CD8-positive, alpha-beta T cell (primary cell): ENCODE measurements at regions of chr17 and their contacts with region 1.

Region 1: GRCh38 chr17:42517516-42517915 is 18.5 kb upstream of the NAGLU start:
- DNase-seq: peak; percentile 68 to 90 (median 84)
- ATAC-seq: peak; percentile 92
- H3K4me3 ChIP-seq: no peak overlapping the region
- H3K4me3 Mint-ChIP-seq: no peak overlapping the region
- H3K27ac ChIP-seq: no peak overlapping the region
- H3K27ac Mint-ChIP-seq: no peak overlapping the region
- H3K4me1 ChIP-seq: no peaks in the 10 kb centered on the region
- H3K4me1 Mint-ChIP-seq: peaks cover 5% of the 10 kb centered on the region
- H3K27me3 ChIP-seq: no peaks in the 10 kb centered on the region
- H3K27me3 Mint-ChIP-seq: no peaks in the 10 kb centered on the region
- CTCF ChIP-seq: peak; percentile 96

Region 2: GRCh38 chr17:42322382-42323267 is 194.9 kb before region 1 on chr17:
- CTCF ChIA-PET with region 1: interaction called, 23 read pairs
- POLR2A ChIA-PET with region 1: no interaction called
- intact Hi-C with region 1: loop called (anchors 1 kb)
- DNase-seq: peak; percentile 89 to 98 (median 96)
- ATAC-seq: peak; percentile 97
- H3K4me3 ChIP-seq: no peak overlapping the region
- H3K4me3 Mint-ChIP-seq: no peak overlapping the region
- H3K27ac ChIP-seq: peak overlapping the region in 1 of 2 experiments; percentile 38
- H3K27ac Mint-ChIP-seq: peak overlapping the region; percentile 82
- H3K4me1 ChIP-seq: peaks cover 17% of the 10 kb centered on the region
- H3K4me1 Mint-ChIP-seq: peaks cover 40% of the 10 kb centered on the region
- H3K27me3 ChIP-seq: no peaks in the 10 kb centered on the region
- H3K27me3 Mint-ChIP-seq: no peaks in the 10 kb centered on the region
- CTCF ChIP-seq: peak; percentile 99

Region 3: GRCh38 chr17:42414704-42415409 is 102.7 kb before region 1 on chr17:
- CTCF ChIA-PET with region 1: interaction called, 77 read pairs
- POLR2A ChIA-PET with region 1: no interaction called
- intact Hi-C with region 1: no loop called
- DNase-seq: peak in 7 of 9 experiments; percentile 29 to 67 (median 45)
- ATAC-seq: peak; percentile 79
- H3K4me3 ChIP-seq: no peak overlapping the region
- H3K4me3 Mint-ChIP-seq: peak overlapping the region; percentile 33
- H3K27ac ChIP-seq: no peak overlapping the region
- H3K27ac Mint-ChIP-seq: peak overlapping the region; percentile 11
- H3K4me1 ChIP-seq: peaks cover 16% of the 10 kb centered on the region
- H3K4me1 Mint-ChIP-seq: peaks cover 12% of the 10 kb centered on the region
- H3K27me3 ChIP-seq: no peaks in the 10 kb centered on the region
- H3K27me3 Mint-ChIP-seq: peaks cover 2% of the 10 kb centered on the region
- CTCF ChIP-seq: no peak

Region 4: DNA sequence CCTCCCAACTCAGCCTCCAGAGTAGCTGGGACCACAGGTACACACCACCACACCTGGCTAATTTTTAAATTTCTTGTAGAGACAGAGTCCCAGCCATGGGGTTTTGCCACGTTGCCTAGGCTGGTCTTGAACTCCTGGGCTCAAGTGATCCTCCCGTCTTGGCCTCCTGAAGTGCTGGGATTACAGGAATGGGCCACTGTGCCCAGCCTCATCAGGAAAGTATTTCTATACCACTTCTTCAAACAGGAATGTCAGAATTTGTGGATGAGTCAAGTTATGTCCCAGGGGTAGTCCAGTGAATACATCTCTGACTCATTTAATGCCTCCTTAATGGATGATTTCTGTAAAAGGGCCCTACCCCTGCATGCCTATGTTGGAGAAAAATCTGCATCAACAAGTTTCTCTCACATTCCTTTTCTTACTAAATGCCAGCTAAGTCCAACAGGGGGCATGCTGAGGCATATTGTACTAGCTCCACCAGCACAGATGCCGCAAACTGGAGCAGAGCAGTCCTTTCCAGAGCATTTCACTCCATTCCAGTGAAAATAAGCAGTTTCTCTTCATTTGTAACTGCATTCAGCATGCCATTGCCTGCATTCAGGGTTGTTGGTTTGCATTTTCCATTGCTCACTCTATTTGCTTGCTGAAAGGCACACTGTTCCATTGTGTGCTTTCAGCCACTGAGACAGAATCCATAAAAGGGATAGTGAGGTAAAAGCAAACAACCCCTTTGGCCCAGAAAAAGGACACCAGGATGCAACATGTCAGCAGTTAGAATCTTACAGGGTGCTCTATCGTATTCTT is 89.2 kb before region 1 on chr17:
- CTCF ChIA-PET with region 1: interaction called, 267 read pairs
- POLR2A ChIA-PET with region 1: interaction called, 3 read pairs
- intact Hi-C with region 1: loop called (anchors 1 kb)
- DNase-seq: peak in 7 of 9 experiments; percentile 16 to 74 (median 58)
- ATAC-seq: peak; percentile 71
- H3K4me3 ChIP-seq: no peak overlapping the region
- H3K4me3 Mint-ChIP-seq: no peak overlapping the region
- H3K27ac ChIP-seq: no peak overlapping the region
- H3K27ac Mint-ChIP-seq: no peak overlapping the region
- H3K4me1 ChIP-seq: peaks cover 1% of the 10 kb centered on the region
- H3K4me1 Mint-ChIP-seq: peaks cover 4% of the 10 kb centered on the region
- H3K27me3 ChIP-seq: peaks cover 3 to 4% of the 10 kb centered on the region in 2 experiments
- H3K27me3 Mint-ChIP-seq: peaks cover 14% of the 10 kb centered on the region
- CTCF ChIP-seq: peak; percentile 78

Region 5: GRCh38 chr17:42438600-42439567 is 78.6 kb before region 1 on chr17:
- CTCF ChIA-PET with region 1: interaction called, 267 read pairs
- POLR2A ChIA-PET with region 1: interaction called, 3 read pairs
- intact Hi-C with region 1: loop called in 1 of 2 experiments (anchors 1 kb)
- DNase-seq: peak in 6 of 9 experiments; percentile 46 to 68 (median 55)
- ATAC-seq: no peak
- H3K4me3 ChIP-seq: no peak overlapping the region
- H3K4me3 Mint-ChIP-seq: no peak overlapping the region
- H3K27ac ChIP-seq: no peak overlapping the region
- H3K27ac Mint-ChIP-seq: no peak overlapping the region
- H3K4me1 ChIP-seq: peaks cover 8% of the 10 kb centered on the region
- H3K4me1 Mint-ChIP-seq: peaks cover 8% of the 10 kb centered on the region
- H3K27me3 ChIP-seq: no peaks in the 10 kb centered on the region
- H3K27me3 Mint-ChIP-seq: peaks cover 6% of the 10 kb centered on the region
- CTCF ChIP-seq: peak; percentile 52

Region 6: DNA sequence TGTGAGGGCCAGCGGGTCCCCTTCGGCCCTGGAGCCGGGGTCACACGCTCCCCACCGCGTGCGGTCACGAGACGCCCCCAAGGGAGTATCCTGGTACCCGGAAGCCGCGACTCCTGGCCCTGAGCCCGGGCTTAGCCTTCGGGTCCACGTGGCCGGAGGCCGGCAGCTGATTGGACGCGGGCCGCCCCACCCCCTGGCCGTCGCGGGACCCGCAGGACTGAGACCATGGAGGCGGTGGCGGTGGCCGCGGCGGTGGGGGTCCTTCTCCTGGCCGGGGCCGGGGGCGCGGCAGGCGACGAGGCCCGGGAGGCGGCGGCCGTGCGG is 18.5 kb after region 1 on chr17 and contains the start of gene NAGLU:
- CTCF ChIA-PET with region 1: interaction called, 22 read pairs
- POLR2A ChIA-PET with region 1: no interaction called
- intact Hi-C with region 1: no loop called
- DNase-seq: peak; percentile 47 to 89 (median 76)
- ATAC-seq: peak; percentile 69
- H3K4me3 ChIP-seq: peak within 1 kb of the TSS; percentile 56 to 82
- H3K4me3 Mint-ChIP-seq: peak within 1 kb of the TSS; percentile 87
- H3K27ac ChIP-seq: peak within 1 kb of the TSS; percentile 33 to 71
- H3K27ac Mint-ChIP-seq: peak within 1 kb of the TSS; percentile 87
- H3K4me1 ChIP-seq: peaks cover 38% of the 10 kb centered on the region
- H3K4me1 Mint-ChIP-seq: peaks cover 42% of the 10 kb centered on the region
- H3K27me3 ChIP-seq: no peaks in the 10 kb centered on the region
- H3K27me3 Mint-ChIP-seq: no peaks in the 10 kb centered on the region
- CTCF ChIP-seq: no peak
- total RNA-seq, gene NAGLU: 7.4 TPM

Region 7: DNA sequence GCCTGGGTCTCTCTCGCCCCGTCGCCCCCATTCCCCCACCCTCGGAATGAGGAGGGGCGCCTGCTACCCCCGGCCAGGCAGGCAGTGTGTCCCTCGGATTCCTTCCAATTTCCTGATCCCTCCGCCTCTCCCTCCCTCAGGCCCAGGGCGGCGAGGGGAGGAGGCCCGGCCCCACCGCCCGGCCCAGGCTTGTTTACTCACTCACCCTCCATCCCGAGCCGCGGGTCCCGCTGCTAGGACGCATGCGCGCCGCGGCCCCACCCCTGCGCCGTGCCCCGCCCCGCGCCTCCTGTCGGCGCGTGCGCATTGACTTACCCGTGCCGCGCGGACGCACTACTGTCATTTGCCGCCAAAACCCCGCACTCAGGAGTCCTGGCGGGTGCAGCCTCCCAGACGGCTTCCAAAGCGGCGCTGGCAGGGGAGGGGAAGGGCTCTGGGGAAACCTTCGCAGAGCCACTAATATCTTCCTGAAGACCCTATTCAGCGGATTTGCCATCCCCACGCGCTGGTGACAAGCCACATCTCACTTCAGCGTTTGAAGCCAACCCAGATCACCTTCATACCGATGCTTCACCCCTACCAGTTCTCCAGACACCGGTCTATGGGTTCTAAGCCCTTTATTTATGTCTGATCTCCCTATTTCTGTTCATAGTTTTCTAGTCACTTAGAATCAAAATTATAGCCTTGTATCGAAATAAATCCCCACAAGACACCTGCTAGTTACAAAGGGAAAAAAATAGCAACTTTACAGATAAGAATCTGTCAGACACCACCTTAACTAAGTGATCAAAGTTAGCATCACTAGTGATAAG is 227.5 kb after region 1 on chr17 and contains the start of gene EZH1:
- CTCF ChIA-PET with region 1: no interaction called
- POLR2A ChIA-PET with region 1: no interaction called
- intact Hi-C with region 1: no loop called
- DNase-seq: peak; percentile 82 to 96 (median 90)
- ATAC-seq: peak; percentile 92
- H3K4me3 ChIP-seq: peak within 1 kb of the TSS; percentile 72 to 73
- H3K4me3 Mint-ChIP-seq: peak within 1 kb of the TSS; percentile 98
- H3K27ac ChIP-seq: peak within 1 kb of the TSS; percentile 62 to 79
- H3K27ac Mint-ChIP-seq: peak within 1 kb of the TSS; percentile 96
- H3K4me1 ChIP-seq: peaks cover 17% of the 10 kb centered on the region
- H3K4me1 Mint-ChIP-seq: peaks cover 31% of the 10 kb centered on the region
- H3K27me3 ChIP-seq: peaks cover 0 to 4% of the 10 kb centered on the region in 2 experiments
- H3K27me3 Mint-ChIP-seq: peaks cover 13% of the 10 kb centered on the region
- CTCF ChIP-seq: no peak
- total RNA-seq, gene EZH1: 59.2 to 63.4 TPM